ENCODE measurements at regions of chr1 and their contacts with region 1.

Region 1: DNA sequence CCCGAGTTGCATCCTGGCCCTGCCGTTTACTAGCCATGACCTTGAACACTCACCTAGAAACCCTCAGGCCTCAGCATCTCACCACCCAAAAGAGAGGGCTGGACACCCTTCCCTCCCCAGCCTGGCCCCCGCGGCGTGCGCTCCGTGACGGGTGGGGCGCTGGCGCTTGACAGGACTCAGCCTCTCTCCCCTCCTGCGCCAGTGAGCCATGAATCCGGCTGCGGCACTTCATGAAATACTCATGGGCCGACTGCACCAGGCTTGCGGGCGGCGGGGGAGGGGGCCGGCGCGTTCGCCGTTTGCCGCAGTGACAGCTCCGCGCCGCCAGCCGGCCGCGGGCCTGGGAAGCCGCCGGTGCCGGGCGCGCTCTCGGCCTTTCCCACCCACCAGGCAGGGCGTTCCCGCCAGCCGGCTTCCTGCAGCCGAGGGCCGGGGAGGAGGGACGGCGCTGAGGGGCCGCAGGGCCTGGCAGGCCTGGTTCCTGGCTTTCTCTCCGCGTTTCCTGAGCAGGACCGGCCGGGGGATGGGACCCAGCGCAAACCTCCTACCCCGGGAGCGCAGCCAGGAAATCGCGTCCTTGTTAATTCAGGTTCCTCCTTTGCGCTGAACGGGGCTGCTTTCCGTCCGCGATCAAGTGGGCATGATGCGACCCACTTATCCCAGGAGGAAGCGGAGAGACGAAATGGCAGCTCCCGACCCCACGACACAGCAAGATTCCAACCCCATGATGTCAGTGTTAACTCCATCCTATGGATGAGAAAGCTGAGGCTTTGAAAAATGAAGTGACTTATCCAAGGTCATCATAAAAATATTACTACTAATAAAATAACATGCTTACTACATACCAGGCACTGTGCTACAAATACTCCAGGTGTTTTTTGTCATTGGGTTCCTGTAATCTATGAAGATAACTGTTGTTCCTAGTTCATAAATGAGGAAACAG is 9.1 kb upstream of the LUZP1 start:
- DNase-seq: no peak
- ATAC-seq: peak; percentile 86
- H3K4me3 ChIP-seq: peak overlapping the region; percentile 46 to 73
- H3K27ac ChIP-seq: peak overlapping the region; percentile 67
- H3K4me1 ChIP-seq: peaks cover 6% of the 10 kb centered on the region
- H3K27me3 ChIP-seq: no peaks in the 10 kb centered on the region
- CTCF ChIP-seq: no peak

Region 2: DNA sequence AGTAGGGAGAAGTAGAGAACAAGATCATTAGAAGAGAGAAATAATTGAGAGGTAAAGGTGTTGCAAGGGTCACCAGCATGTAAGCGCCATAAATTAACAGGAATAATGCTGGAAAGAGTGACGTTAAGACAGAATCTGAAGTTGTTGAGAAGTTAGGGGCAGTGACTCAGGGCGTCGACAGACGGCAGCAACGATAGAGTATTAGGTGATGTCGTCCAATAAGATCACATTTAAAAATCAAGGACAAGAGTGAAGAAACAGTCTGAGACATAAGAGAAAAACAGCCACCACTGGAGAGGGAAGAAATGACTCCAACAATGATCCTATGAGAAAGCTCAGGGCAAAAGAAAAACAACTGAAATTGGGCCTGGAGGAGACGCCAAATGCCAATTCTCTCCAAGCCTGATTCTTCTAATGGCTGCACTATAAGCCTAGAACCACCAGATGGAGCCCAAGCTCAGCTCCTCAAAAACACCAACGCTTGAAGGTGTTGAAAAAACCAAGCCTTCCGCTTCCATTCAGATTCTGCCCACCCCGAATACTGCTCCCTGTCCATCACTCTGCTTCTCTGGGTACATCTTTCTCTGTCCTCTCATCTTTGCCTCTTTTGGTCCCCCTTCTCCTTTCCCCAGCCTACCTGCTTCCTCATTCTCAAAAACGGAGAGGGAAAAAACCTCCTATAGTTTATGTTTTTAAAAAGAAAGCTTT is 79.1 kb before region 1 on chr1:
- CTCF ChIA-PET with region 1: interaction called, 49 read pairs
- POLR2A ChIA-PET with region 1: interaction called, 10 read pairs
- in situ Hi-C with region 1: loop called (anchors 25 kb)
- intact Hi-C with region 1: no loop called
- DNase-seq: peak; percentile 80
- ATAC-seq: peak; percentile 76
- H3K4me3 ChIP-seq: no peak overlapping the region
- H3K27ac ChIP-seq: peak overlapping the region; percentile 40; the same call in 1 of the 2 replicates
- H3K4me1 ChIP-seq: peaks cover 46% of the 10 kb centered on the region
- H3K27me3 ChIP-seq: no peaks in the 10 kb centered on the region
- CTCF ChIP-seq: peak; percentile 93

Region 3: GRCh38 chr1:23682946-23683345 is 505.2 kb after region 1 on chr1:
- CTCF ChIA-PET with region 1: no interaction called
- POLR2A ChIA-PET with region 1: interaction called, 11 read pairs
- in situ Hi-C with region 1: no loop called
- intact Hi-C with region 1: no loop called
- DNase-seq: no peak
- ATAC-seq: no peak
- H3K4me3 ChIP-seq: no peak overlapping the region
- H3K27ac ChIP-seq: no peak overlapping the region
- H3K4me1 ChIP-seq: no peaks in the 10 kb centered on the region
- H3K27me3 ChIP-seq: no peaks in the 10 kb centered on the region; the same call in 1 of the 2 replicates
- CTCF ChIP-seq: no peak